CD4-positive, alpha-beta T cell (primary cell): ENCODE measurements at regions of chr17 and their contacts with region 1.

Region 1: DNA sequence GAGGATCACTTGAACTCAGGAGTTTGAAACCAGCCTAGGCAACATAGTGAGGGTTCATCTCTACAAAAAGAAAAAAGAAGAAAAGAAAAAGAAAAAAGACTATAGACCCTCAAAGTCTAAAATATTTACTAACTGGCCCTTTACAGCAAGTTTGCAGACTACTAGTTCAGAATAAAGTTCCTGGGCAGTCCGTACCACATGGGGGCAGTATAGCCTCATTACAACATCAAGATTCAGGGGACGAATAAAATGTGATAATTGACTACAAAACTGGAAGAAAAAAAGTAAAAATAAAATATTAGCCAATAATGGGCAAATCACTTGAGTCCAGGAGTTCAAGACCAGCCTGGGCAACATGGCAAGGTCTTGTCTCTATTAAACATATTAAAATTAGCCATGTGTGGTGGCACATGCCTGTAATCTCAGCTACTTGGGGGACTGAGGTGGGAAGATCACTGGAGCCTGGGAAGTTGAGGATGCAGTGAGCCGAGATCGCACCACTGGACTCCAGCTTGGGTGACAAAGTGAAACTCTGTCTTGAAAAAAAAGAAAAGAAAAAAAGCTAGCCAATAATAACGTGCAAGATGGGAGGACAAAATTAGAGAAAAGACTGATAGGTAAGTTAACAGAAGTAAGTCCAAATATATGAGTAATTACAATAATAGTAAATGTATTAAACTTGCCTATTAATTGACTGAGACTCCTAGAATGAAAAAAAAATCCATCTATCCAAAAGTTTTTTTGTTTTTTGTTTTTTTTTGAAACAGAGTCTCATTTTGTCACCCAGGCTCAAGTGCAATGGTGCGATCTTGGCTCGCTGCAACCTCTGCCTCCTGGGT is 129.4 kb upstream of the SEC14L1 start:
- DNase-seq: peak; percentile 31 to 74 (median 46)
- ATAC-seq: no peak
- H3K4me3 ChIP-seq: no peak overlapping the region
- H3K4me3 Mint-ChIP-seq: no peak overlapping the region
- H3K27ac ChIP-seq: no peak overlapping the region
- H3K27ac Mint-ChIP-seq: no peak overlapping the region
- H3K4me1 ChIP-seq: no peaks in the 10 kb centered on the region
- H3K4me1 Mint-ChIP-seq: no peaks in the 10 kb centered on the region
- H3K27me3 ChIP-seq: no peaks in the 10 kb centered on the region
- H3K27me3 Mint-ChIP-seq: no peaks in the 10 kb centered on the region
- CTCF ChIP-seq: peak; percentile 67

Region 2: DNA sequence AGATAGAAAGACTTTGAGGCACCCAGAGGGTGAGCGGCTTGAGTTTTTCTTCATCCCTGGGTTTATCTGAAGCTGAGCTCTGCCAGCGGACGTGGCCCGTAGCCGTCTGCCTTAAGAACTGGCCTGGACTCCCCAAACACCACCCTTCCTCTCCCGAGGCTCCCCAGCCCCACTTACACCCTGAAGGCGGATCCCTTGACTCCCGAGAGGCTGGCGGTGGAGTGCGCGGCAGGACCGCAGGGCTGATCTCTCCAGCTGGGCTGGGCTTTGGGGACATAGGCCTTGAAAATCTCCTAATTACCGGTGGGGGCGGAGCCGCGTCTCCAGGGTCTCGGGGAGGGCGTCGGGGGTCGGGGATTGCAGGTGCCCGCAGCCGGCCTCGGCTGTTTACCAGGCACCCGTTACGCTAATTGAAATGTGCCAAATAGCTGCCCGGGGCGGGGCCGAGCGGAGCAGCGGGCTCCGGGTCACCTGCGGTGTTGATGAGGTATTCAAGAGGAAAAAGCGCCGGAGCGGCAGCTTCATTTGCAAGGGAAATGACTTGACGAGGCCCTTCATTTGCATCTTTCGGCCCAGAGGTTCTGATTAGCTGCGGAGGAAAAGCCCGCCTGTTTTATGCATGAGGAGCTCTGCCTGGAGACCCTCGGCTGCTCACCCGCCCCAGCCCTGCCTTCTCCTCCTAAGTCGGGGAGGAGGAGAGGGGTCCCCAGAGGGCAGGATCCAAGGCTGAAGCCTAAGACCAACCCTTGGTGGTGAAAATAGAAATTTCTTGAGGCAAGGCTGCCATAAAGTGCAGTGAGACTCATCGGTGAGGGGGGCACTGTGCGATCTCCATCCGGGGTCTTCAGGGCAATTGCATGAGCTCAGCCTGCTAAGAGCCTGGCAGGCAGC is 42.4 kb before region 1 on chr17:
- CTCF ChIA-PET with region 1: no interaction called
- POLR2A ChIA-PET with region 1: no interaction called
- intact Hi-C with region 1: loop called in 1 of 2 experiments (anchors 5 kb)
- DNase-seq: peak; percentile 20 to 76 (median 46)
- ATAC-seq: peak; percentile 78
- H3K4me3 ChIP-seq: peak overlapping the region; percentile 54
- H3K4me3 Mint-ChIP-seq: peak overlapping the region; percentile 82
- H3K27ac ChIP-seq: no peak overlapping the region
- H3K27ac Mint-ChIP-seq: peak overlapping the region; percentile 74
- H3K4me1 ChIP-seq: peaks cover 25% of the 10 kb centered on the region
- H3K4me1 Mint-ChIP-seq: peaks cover 28% of the 10 kb centered on the region
- H3K27me3 ChIP-seq: no peaks in the 10 kb centered on the region
- H3K27me3 Mint-ChIP-seq: peaks cover 4% of the 10 kb centered on the region
- CTCF ChIP-seq: no peak

Region 3: DNA sequence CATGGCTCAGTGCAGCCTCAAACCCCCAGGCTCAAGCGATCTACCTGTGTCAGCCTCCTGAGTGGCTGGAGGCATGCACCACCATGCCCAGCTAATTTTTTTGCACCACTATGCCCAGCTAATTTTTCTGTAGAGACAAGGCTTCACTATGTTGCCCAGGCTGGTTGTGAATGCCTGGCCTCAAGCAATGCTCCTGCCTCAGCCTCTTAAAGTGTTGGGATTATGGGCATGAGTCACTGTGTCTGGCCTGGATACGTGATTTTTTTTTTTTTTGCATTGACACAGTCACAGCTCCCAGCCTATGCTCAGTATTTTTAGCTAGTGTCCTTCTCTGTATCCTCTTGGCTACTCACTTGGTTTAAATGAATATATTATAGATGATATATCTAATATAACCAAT is 570.1 kb after region 1 on chr17:
- CTCF ChIA-PET with region 1: no interaction called
- POLR2A ChIA-PET with region 1: no interaction called
- intact Hi-C with region 1: no loop called
- DNase-seq: no peak
- ATAC-seq: no peak
- H3K4me3 ChIP-seq: no peak overlapping the region
- H3K4me3 Mint-ChIP-seq: no peak overlapping the region
- H3K27ac ChIP-seq: no peak overlapping the region
- H3K27ac Mint-ChIP-seq: no peak overlapping the region
- H3K4me1 ChIP-seq: no peaks in the 10 kb centered on the region
- H3K4me1 Mint-ChIP-seq: peaks cover 6% of the 10 kb centered on the region
- H3K27me3 ChIP-seq: no peaks in the 10 kb centered on the region
- H3K27me3 Mint-ChIP-seq: no peaks in the 10 kb centered on the region
- CTCF ChIP-seq: no peak